ENCODE measurements at regions of chr5 and their contacts with region 1.

Region 1: GRCh38 chr5:179900711-179901110 is 7.0 kb downstream of the TBC1D9B start:
- DNase-seq: peak; percentile 50 to 74
- ATAC-seq: peak; percentile 77 to 78
- H3K4me3 ChIP-seq: peak overlapping the region in 1 of 4 donors; percentile 21
- H3K27ac ChIP-seq: peak overlapping the region; percentile 50 to 81 (median 74)
- H3K4me1 ChIP-seq: peaks cover 15 to 25% of the 10 kb centered on the region in 2 donors
- H3K27me3 ChIP-seq: no peaks in the 10 kb centered on the region
- CTCF ChIP-seq: no peak
- POLR2A ChIP-seq: no peak

Region 2: DNA sequence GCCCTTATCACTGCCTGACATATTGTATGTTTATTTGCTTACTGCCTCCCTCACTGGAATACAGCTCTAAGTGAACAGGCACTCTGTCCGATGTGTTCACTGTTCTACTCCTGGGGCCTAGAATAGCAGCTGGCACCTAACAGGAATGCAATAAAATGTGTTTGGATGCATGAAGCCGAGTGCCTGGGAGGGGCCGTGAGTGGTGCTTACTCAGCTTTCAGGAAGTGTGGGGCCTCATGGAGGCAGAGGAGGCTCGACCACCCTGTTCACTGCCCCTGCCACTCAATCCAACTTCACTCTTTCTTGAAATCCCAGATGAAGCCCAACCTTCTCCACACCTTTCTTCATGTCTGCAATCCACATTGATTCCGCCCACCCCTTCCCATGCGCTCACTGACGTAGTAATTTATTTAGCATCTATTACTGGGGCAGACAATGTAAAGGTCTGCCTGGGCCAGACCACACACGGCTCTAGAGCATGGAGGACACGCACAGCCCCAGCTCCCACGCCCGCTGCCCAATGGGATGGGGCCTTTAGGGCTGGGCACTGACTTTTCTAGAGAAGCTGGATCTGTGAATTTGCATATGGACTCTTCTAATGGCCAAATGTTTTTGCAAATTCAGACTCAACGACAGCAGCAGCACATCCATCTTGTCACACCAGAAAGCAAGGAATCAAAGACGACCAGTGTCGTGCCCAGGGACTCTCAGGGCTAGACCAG is 14.4 kb before region 1 on chr5:
- in situ Hi-C with region 1: no loop called
- intact Hi-C with region 1: loop called (anchors 2 kb)
- DNase-seq: no peak
- ATAC-seq: peak; percentile 43 to 55
- H3K4me3 ChIP-seq: no peak overlapping the region
- H3K27ac ChIP-seq: peak overlapping the region; percentile 20 to 73 (median 38)
- H3K4me1 ChIP-seq: peaks cover 12 to 16% of the 10 kb centered on the region in 2 donors
- H3K27me3 ChIP-seq: no peaks in the 10 kb centered on the region
- CTCF ChIP-seq: no peak
- POLR2A ChIP-seq: no peak

Region 3: GRCh38 chr5:180136630-180137381 is 236.1 kb after region 1 on chr5:
- in situ Hi-C with region 1: no loop called
- intact Hi-C with region 1: no loop called
- DNase-seq: no peak
- ATAC-seq: no peak
- H3K4me3 ChIP-seq: no peak overlapping the region
- H3K27ac ChIP-seq: no peak overlapping the region
- H3K4me1 ChIP-seq: no peaks in the 10 kb centered on the region
- H3K27me3 ChIP-seq: peaks cover 0 to 9% (median 0%) of the 10 kb centered on the region in 3 donors
- CTCF ChIP-seq: no peak
- POLR2A ChIP-seq: no peak

Measured in gastrocnemius medialis (tissue), 4 donors.